B cell (primary cell): ENCODE measurements at regions of chr12 and their contacts with region 1.

Region 1: GRCh38 chr12:132828706-132829534 is at the start of gene GOLGA3:
- DNase-seq: peak; percentile 97
- ATAC-seq: peak; percentile 94
- H3K4me3 ChIP-seq: peak within 1 kb of the TSS; percentile 81 to 90 (median 85)
- H3K4me3 Mint-ChIP-seq: peak within 1 kb of the TSS; percentile 96
- H3K27ac ChIP-seq: peak within 1 kb of the TSS; percentile 99
- H3K27ac Mint-ChIP-seq: peak within 1 kb of the TSS; percentile 100
- H3K4me1 ChIP-seq: peaks cover 27 to 29% of the 10 kb centered on the region in 2 donors
- H3K4me1 Mint-ChIP-seq: peaks cover 42% of the 10 kb centered on the region
- H3K27me3 ChIP-seq: no peaks in the 10 kb centered on the region
- H3K27me3 Mint-ChIP-seq: no peaks in the 10 kb centered on the region
- CTCF ChIP-seq: no peak
- total RNA-seq, gene GOLGA3: 66.0 and 68.9 TPM in 2 replicates

Region 2: DNA sequence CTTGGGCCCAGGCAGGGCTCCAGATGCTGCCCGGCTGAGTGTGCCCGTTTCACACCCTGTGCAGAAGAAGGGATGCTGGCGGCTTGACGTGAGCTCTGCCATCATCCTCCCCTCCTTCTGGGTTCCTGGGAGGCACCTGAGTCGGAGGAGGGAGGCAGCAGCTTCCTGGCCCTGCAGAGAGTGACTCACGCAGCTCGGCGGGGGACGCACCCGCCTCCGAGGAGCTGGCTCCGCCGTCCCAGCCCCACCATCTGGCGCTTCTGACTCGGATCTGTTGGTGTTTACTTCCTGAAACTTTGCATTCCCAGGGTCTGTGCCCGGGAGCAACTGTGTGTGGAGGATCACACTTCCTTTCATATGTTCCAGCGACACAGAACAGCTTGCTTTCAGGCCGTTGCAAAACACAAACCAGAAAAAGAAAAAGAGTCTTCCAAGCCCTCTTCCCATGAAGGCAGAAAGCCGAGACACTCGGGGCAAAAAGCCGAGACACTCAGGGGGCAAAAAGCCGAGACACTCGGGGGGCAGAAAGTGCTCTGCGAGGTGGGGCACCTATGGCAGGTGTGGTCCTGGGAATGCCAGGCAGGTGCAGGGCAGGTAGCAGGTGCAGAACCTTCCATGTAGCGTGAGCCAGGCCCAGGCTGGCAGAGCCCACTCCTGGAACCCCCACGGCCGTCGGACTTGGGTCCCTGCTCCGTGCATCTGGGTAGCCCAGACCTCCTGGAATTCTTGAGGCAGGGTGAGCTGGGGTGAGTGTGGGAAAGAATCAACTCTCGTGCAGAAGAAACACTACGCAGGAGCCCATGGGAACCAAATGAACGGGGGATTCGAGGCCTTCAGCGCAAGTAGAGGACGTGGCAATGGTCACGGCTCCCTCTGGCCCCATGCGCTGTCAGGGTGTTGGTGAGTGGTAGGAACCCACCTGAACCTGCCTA is 472.0 kb before region 1 on chr12:
- CTCF ChIA-PET with region 1: no interaction called
- POLR2A ChIA-PET with region 1: no interaction called
- intact Hi-C with region 1: no loop called
- DNase-seq: no peak
- ATAC-seq: no peak
- H3K4me3 ChIP-seq: no peak overlapping the region
- H3K4me3 Mint-ChIP-seq: no peak overlapping the region
- H3K27ac ChIP-seq: no peak overlapping the region
- H3K27ac Mint-ChIP-seq: no peak overlapping the region
- H3K4me1 ChIP-seq: no peaks in the 10 kb centered on the region
- H3K4me1 Mint-ChIP-seq: peaks cover 3% of the 10 kb centered on the region
- H3K27me3 ChIP-seq: peaks cover 0 to 7% (median 0%) of the 10 kb centered on the region in 4 experiments
- H3K27me3 Mint-ChIP-seq: peaks cover 4% of the 10 kb centered on the region
- CTCF ChIP-seq: no peak

Region 3: DNA sequence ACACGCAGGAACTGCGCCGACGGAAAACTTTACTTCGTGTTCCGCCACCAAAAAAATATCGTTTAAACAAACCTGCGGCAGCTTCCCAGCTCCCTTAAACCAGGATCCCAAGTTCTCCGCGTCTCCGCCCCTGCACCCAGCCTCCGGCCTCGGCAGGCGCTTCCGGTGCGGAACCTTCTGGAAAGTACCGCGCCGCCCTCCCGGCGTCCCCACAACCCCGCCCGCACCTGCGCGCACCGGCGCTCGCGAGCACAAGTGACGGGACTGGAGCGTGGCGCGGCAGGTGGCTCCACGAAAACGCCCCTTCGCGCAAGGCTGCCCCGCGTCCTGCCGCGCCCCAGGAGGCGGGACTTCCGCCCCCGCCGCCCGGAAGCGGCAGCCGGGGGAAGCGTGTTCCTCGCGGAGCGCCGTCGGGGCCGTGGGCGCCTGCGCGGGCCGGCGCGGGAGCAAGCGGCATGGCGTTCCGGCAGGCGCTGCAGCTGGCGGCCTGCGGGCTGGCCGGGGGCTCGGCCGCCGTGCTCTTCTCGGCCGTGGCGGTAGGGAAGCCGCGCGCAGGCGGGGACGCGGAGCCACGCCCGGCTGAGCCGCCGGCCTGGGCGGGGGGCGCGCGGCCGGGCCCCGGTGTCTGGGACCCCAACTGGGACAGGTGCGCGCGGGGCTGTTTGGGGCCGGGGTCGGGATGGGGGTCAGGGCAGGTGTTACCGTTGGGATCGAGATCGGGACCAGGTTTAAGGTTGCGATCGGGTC is 118.3 kb before region 1 on chr12 and contains the start of gene PGAM5:
- CTCF ChIA-PET with region 1: no interaction called
- POLR2A ChIA-PET with region 1: interaction called, 4 read pairs
- intact Hi-C with region 1: loop called (anchors 1 kb)
- DNase-seq: peak; percentile 98
- ATAC-seq: peak; percentile 96
- H3K4me3 ChIP-seq: peak within 1 kb of the TSS; percentile 61 to 91 (median 79)
- H3K4me3 Mint-ChIP-seq: peak within 1 kb of the TSS; percentile 92
- H3K27ac ChIP-seq: peak within 1 kb of the TSS; percentile 95 to 97
- H3K27ac Mint-ChIP-seq: peak within 1 kb of the TSS; percentile 90
- H3K4me1 ChIP-seq: peaks cover 10 to 23% of the 10 kb centered on the region in 2 donors
- H3K4me1 Mint-ChIP-seq: peaks cover 13% of the 10 kb centered on the region
- H3K27me3 ChIP-seq: no peaks in the 10 kb centered on the region
- H3K27me3 Mint-ChIP-seq: no peaks in the 10 kb centered on the region
- CTCF ChIP-seq: no peak
- total RNA-seq, gene PGAM5: 28.3 and 29.9 TPM in 2 replicates

Region 4: DNA sequence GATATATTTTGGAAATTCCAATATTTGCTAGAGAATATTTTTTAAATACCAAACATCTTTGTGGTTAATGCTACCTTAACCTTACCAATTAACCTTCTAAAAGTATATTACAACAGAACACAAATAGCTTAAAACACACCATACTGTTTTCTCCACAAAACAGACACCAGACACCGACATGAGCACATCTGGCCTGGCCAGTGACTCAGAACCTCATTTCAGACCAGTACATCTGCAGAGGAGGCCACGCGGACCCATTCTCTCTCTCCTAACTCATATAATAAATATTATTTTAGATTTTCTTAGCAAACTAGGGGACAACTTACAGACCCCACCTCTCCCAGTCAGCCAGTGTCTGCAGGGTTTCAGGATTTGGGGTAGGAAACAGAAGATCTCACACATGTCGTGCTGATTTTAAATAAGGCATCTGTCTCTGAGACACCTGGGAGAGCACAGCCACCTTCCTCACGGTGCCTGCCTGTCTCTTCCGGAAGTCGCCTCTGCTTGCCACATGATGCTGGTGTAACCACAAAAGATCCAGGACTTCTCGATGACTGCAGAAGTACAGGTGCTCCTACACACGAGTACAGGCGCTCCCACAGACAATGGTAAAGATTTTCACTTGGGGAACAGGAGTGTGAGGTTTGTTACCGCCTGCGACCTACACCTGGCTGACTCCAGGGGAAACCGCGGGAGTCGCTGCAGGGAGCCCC is 57.6 kb before region 1 on chr12:
- CTCF ChIA-PET with region 1: no interaction called
- POLR2A ChIA-PET with region 1: interaction called, 10 read pairs
- intact Hi-C with region 1: loop called (anchors 1 kb)
- DNase-seq: peak; percentile 87
- ATAC-seq: peak; percentile 56
- H3K4me3 ChIP-seq: peak overlapping the region in 4 of 5 experiments; percentile 7 to 31 (median 16)
- H3K4me3 Mint-ChIP-seq: peak overlapping the region; percentile 69
- H3K27ac ChIP-seq: peak overlapping the region; percentile 87 to 89
- H3K27ac Mint-ChIP-seq: peak overlapping the region; percentile 88
- H3K4me1 ChIP-seq: peaks cover 60 to 76% of the 10 kb centered on the region in 2 donors
- H3K4me1 Mint-ChIP-seq: peaks cover 61% of the 10 kb centered on the region
- H3K27me3 ChIP-seq: no peaks in the 10 kb centered on the region
- H3K27me3 Mint-ChIP-seq: no peaks in the 10 kb centered on the region
- CTCF ChIP-seq: no peak

Region 5: DNA sequence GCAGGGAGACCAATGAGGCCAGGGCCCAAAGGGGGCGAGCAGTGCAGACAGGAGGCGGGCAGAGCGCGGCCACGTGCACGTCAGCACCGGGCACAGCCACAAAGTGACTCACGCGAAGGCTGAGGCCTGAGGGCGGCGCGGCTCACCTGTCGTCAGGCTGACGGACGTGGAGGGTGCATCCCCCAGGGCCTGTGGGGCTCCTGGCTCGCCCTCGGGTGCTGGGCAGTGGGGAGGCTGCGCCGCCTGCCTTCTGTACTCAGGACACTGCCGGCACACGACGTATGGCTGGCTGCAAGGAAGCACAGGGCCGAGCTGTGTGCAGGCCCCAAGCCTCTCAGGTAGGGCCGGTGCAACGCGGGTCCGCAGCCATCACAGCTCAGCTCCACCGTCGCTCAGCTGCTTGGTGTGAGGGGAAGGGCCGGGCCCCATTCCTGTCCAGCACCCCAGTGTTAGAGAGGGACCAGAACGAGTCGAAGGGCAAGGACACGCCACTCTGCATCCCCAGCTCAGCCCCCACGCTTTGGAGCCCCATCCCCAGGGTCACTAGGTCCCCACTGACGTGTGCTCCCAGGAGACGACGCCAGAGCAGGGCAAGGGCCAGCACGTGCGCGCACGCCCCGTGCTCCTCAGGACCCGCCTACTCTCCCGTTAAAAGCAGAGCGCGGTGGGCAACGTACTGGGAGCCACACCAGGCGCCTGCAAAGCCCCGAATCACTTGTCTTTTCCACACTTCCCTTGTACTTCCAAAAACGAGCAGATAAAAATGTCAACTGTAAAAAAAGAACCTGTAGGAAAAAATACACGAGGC is 24.6 kb after region 1 on chr12:
- CTCF ChIA-PET with region 1: no interaction called
- POLR2A ChIA-PET with region 1: no interaction called
- intact Hi-C with region 1: no loop called
- DNase-seq: no peak
- ATAC-seq: no peak
- H3K4me3 ChIP-seq: no peak overlapping the region
- H3K4me3 Mint-ChIP-seq: no peak overlapping the region
- H3K27ac ChIP-seq: no peak overlapping the region
- H3K27ac Mint-ChIP-seq: no peak overlapping the region
- H3K4me1 ChIP-seq: no peaks in the 10 kb centered on the region
- H3K4me1 Mint-ChIP-seq: no peaks in the 10 kb centered on the region
- H3K27me3 ChIP-seq: no peaks in the 10 kb centered on the region
- H3K27me3 Mint-ChIP-seq: no peaks in the 10 kb centered on the region
- CTCF ChIP-seq: no peak

Region 6: GRCh38 chr12:133037207-133038005 is 208.5 kb after region 1 on chr12 and contains the start of gene ZNF84:
- CTCF ChIA-PET with region 1: no interaction called
- POLR2A ChIA-PET with region 1: no interaction called
- intact Hi-C with region 1: loop called (anchors 2 kb)
- DNase-seq: peak; percentile 99
- ATAC-seq: peak; percentile 95
- H3K4me3 ChIP-seq: peak within 1 kb of the TSS; percentile 51 to 82 (median 69)
- H3K4me3 Mint-ChIP-seq: peak within 1 kb of the TSS; percentile 97
- H3K27ac ChIP-seq: peak within 1 kb of the TSS; percentile 88 to 95
- H3K27ac Mint-ChIP-seq: peak within 1 kb of the TSS; percentile 99
- H3K4me1 ChIP-seq: peaks cover 7 to 10% of the 10 kb centered on the region in 2 donors
- H3K4me1 Mint-ChIP-seq: peaks cover 13% of the 10 kb centered on the region
- H3K27me3 ChIP-seq: no peaks in the 10 kb centered on the region
- H3K27me3 Mint-ChIP-seq: peaks cover 3% of the 10 kb centered on the region
- CTCF ChIP-seq: no peak
- total RNA-seq, gene ZNF84: 48.4 and 61.5 TPM in 2 replicates

Region 7: GRCh38 chr12:133106253-133106652 is 277.3 kb after region 1 on chr12:
- CTCF ChIA-PET with region 1: no interaction called
- POLR2A ChIA-PET with region 1: no interaction called
- intact Hi-C with region 1: no loop called
- DNase-seq: peak; percentile 29
- ATAC-seq: no peak
- H3K4me3 ChIP-seq: peak overlapping the region in 1 of 5 experiments; percentile 23
- H3K4me3 Mint-ChIP-seq: no peak overlapping the region
- H3K27ac ChIP-seq: no peak overlapping the region
- H3K27ac Mint-ChIP-seq: no peak overlapping the region
- H3K4me1 ChIP-seq: no peaks in the 10 kb centered on the region
- H3K4me1 Mint-ChIP-seq: no peaks in the 10 kb centered on the region
- H3K27me3 ChIP-seq: no peaks in the 10 kb centered on the region
- H3K27me3 Mint-ChIP-seq: no peaks in the 10 kb centered on the region
- CTCF ChIP-seq: no peak